Naive thymus-derived CD4-positive, alpha-beta T cell (primary cell): ENCODE measurements at regions of chr5 and their contacts with region 1.

Region 1: DNA sequence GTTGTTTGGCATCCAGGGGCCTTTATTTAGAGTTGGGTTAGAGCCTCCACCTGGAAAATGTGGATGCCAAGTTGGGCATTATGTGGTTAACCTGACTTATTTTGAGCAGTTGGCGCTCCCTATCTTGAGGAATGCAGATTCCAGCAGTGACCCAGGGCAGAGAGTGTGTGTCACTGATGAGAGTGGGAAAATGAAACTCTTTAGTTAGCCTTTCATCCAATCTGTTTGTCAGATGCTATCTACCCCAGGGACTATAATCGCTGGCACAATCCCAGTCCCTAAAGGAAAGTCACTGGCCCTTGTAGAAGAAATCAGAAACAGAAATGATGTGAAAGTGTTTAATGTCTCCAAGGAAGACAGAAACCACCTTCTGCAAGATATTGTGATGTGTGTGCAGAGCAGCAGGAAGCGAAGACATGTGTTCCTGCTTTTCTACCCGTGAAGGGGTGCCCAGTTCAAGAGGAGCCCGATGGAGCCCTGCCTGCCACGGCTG is 10.2 kb upstream of the STING1 start:
- DNase-seq: peak in 1 of 9 donors; percentile 30
- ATAC-seq: peak; percentile 65
- H3K4me3 ChIP-seq: peak overlapping the region; percentile 11
- H3K4me3 Mint-ChIP-seq: peak overlapping the region; percentile 49 to 80 (median 68)
- H3K27ac ChIP-seq: peak overlapping the region; percentile 6
- H3K27ac Mint-ChIP-seq: peak overlapping the region; percentile 28 to 93 (median 77)
- H3K4me1 ChIP-seq: peaks cover 0 to 15% of the 10 kb centered on the region in 2 donors
- H3K4me1 Mint-ChIP-seq: peaks cover 7 to 37% (median 32%) of the 10 kb centered on the region in 7 donors
- H3K27me3 ChIP-seq: no peaks in the 10 kb centered on the region
- H3K27me3 Mint-ChIP-seq: no peaks in the 10 kb centered on the region

Region 2: DNA sequence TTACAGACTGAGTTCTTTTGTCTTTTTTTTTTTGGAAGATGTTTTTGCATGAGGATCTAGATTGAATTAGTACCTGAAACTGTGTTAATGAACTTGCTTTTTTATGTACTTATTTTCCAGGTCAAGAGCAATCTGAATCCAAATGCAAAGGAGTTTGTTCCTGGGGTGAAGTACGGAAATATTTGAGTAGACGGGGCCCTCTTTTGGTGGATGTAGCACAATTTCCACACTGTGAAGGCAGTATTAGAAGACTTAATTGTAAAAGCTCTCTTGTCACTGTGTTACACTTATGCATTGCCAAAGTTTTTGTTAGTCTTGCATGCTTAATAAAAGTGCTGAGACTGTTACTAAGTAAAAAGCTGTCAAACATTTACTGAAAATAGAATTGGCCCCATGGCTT is 124.1 kb before region 1 on chr5:
- CTCF ChIA-PET with region 1: no interaction called
- POLR2A ChIA-PET with region 1: no interaction called
- intact Hi-C with region 1: no loop called
- DNase-seq: no peak
- ATAC-seq: no peak
- H3K4me3 ChIP-seq: no peak overlapping the region
- H3K4me3 Mint-ChIP-seq: no peak overlapping the region
- H3K27ac ChIP-seq: no peak overlapping the region
- H3K27ac Mint-ChIP-seq: peak overlapping the region in 3 of 9 donors; percentile 5 to 63 (median 14)
- H3K4me1 ChIP-seq: no peaks in the 10 kb centered on the region
- H3K4me1 Mint-ChIP-seq: peaks cover 0 to 15% (median 0%) of the 10 kb centered on the region in 7 donors
- H3K27me3 ChIP-seq: no peaks in the 10 kb centered on the region
- H3K27me3 Mint-ChIP-seq: no peaks in the 10 kb centered on the region

Region 3: DNA sequence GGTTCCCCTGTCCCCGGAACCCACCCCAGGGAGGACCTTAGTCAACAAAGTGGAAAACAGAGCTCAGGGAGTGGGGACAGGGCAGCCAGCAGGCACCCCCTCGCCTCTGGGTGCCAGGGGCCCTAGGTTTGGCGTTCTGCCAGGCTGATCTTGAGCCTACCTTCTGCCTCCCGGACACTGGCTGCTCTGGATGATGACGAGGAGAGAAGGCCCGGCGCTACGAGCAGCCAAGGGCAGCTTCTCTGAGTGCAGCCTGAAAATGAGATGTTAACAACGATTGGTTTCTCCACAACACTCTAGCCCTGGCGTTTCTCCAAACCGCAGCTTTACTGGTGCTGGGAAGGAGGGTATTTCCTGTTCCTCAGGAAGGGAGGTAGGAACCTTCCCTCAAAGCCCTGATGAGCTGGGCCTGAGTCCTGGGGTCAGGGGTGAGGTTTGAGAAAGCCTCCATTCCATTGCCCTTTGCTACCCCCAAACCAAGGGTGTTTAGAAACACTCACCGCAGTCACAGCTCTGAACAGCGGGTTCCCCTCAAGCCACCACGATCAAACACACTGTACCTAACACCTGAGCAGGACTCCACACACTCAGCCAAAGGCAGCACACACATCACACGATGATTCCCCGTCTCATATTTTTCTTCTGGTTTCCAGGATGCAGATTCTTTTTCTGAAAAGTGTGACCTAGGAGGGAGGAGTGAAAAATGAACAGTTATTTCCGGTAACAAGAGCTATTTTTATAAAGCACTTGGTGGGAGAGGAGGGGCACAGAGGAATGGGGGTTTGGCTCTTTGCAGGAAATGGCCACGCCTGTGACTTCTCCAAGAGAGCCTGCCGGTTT is 10.5 kb before region 1 on chr5 and contains the start of gene STING1:
- CTCF ChIA-PET with region 1: interaction called, 3 read pairs
- POLR2A ChIA-PET with region 1: interaction called, 32 read pairs
- intact Hi-C with region 1: loop called in 1 of 2 experiments (anchors 1 kb)
- DNase-seq: peak; percentile 29 to 83 (median 71)
- ATAC-seq: peak; percentile 86
- H3K4me3 ChIP-seq: peak within 1 kb of the TSS; percentile 87
- H3K4me3 Mint-ChIP-seq: peak within 1 kb of the TSS; percentile 86 to 99 (median 94)
- H3K27ac ChIP-seq: peak within 1 kb of the TSS; percentile 80
- H3K27ac Mint-ChIP-seq: peak within 1 kb of the TSS; percentile 94 to 99 (median 96)
- H3K4me1 ChIP-seq: peaks cover 21 to 29% of the 10 kb centered on the region in 2 donors
- H3K4me1 Mint-ChIP-seq: peaks cover 26 to 45% (median 39%) of the 10 kb centered on the region in 7 donors
- H3K27me3 ChIP-seq: no peaks in the 10 kb centered on the region
- H3K27me3 Mint-ChIP-seq: no peaks in the 10 kb centered on the region
- total RNA-seq, gene STING1: 124 to 213 (median 130) TPM

Region 4: DNA sequence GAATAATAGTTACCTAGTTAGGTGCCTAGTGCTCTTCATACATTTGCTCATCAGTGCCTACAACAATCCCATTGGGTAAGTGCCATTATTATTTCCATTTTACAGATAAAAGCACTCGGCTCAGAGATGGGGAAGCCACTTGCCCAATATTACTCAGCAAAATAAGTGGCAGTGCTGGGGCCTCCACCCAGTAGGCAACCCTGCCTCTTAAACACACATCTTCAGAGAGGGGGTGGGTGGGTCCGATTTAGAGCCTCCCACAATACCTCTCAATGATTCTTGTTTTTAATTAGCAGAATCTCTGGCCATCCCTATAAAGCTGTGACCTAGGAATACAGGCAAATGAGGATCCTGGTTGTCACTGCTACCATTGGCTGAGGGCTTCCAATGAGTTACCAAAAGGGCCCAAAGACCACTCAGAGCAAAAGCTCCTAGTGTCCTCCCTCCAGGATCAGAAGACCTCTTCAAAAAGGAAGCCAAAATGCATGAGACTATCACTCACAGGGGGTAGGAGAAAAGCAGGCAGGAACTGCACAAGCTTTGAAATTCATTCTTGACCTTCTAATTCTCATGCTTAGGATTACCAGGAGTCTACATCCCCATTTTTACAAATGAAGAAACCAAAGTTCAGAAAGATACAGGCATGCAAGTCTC is 32.3 kb after region 1 on chr5:
- CTCF ChIA-PET with region 1: no interaction called
- POLR2A ChIA-PET with region 1: no interaction called
- intact Hi-C with region 1: no loop called
- DNase-seq: no peak
- ATAC-seq: no peak
- H3K4me3 ChIP-seq: no peak overlapping the region
- H3K4me3 Mint-ChIP-seq: no peak overlapping the region
- H3K27ac ChIP-seq: no peak overlapping the region
- H3K27ac Mint-ChIP-seq: no peak overlapping the region
- H3K4me1 ChIP-seq: no peaks in the 10 kb centered on the region
- H3K4me1 Mint-ChIP-seq: no peaks in the 10 kb centered on the region
- H3K27me3 ChIP-seq: no peaks in the 10 kb centered on the region
- H3K27me3 Mint-ChIP-seq: no peaks in the 10 kb centered on the region